CD4-positive, alpha-beta T cell (primary cell): ENCODE measurements at regions of chr20 and their contacts with region 1.

Region 1: DNA sequence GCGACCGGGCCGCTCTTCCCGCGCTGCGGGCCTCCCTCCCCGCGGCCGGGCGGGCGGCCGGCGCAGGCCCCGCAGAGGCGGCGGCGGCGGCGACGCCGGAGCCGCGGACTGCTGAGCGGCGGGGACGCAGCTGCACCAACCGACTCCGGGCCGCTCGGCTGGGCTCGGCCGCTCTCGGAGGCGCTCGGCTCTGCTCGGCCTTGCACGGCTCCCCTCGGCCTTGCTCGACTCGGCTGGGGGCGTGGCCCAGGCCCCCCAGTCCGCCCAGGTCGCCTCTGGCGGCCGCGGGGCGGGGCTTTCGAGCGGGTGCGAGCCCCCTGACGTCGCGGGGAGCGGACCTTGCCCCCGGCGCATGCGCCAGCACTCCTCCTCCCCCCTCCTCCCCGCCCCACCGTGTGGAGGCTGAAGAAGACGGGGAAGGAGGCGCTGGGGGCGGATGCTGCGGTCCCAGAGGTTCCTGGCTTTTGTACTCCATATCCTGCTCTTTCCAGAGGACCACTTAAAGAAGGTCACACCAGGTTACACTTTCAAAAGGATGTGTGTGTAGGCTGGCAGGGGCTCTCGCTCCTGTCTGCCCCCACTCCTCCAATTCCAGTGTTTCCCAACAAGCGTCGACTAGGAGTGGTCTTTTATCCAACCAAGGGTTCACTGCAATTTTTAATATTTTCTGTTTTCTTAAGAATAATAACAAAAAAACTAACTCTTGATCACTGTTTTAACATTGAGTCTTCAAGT is at the start of gene ZHX3:
- DNase-seq: peak; percentile 84 to 98 (median 96)
- ATAC-seq: peak; percentile 93
- H3K4me3 ChIP-seq: peak within 1 kb of the TSS; percentile 77
- H3K4me3 Mint-ChIP-seq: peak within 1 kb of the TSS; percentile 90
- H3K27ac ChIP-seq: peak within 1 kb of the TSS; percentile 38 to 57
- H3K27ac Mint-ChIP-seq: peak within 1 kb of the TSS; percentile 75
- H3K4me1 ChIP-seq: peaks cover 13% of the 10 kb centered on the region
- H3K4me1 Mint-ChIP-seq: peaks cover 38% of the 10 kb centered on the region
- H3K27me3 ChIP-seq: no peaks in the 10 kb centered on the region
- H3K27me3 Mint-ChIP-seq: no peaks in the 10 kb centered on the region
- CTCF ChIP-seq: no peak
- total RNA-seq, gene ZHX3: 6.6 to 7.6 TPM

Region 2: DNA sequence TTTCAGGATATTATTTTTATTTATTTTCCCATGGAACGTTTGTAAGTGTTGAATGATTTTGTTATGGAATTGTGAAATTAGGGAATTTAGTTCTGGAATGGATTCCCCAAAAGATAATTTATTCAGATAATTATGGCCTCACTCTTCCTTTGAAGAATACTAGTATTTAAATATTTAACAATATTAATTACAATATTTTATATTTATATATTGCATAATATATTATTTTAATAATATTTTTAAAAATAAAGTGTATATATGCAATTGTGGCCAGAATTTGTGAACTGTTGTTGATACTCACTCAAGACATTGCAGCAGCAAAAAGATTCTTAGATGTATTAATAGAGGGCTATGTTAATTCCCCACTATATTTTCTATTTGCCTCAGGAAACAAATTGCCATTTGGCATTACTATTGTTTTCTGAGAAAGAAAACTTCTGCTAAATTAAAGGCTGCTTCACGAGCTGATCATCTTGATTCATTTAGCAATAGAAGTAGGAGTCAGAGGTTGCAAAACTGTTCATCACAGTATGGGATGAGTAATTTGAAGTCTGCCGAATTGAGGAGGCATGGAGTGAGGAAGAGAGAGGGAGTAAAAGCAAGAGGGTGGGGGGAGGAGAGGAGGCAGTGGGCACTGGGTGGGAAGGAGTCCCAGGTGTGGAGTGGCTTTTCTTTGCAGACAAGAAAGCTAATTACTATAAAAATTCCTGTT is 1626.4 kb before region 1 on chr20:
- CTCF ChIA-PET with region 1: no interaction called
- POLR2A ChIA-PET with region 1: no interaction called
- intact Hi-C with region 1: no loop called
- DNase-seq: no peak
- ATAC-seq: no peak
- H3K4me3 ChIP-seq: no peak overlapping the region
- H3K4me3 Mint-ChIP-seq: no peak overlapping the region
- H3K27ac ChIP-seq: no peak overlapping the region
- H3K27ac Mint-ChIP-seq: no peak overlapping the region
- H3K4me1 ChIP-seq: no peaks in the 10 kb centered on the region
- H3K4me1 Mint-ChIP-seq: no peaks in the 10 kb centered on the region
- H3K27me3 ChIP-seq: no peaks in the 10 kb centered on the region
- H3K27me3 Mint-ChIP-seq: no peaks in the 10 kb centered on the region
- CTCF ChIP-seq: no peak

Region 3: GRCh38 chr20:40668449-40669228 is 649.1 kb before region 1 on chr20:
- CTCF ChIA-PET with region 1: no interaction called
- POLR2A ChIA-PET with region 1: no interaction called
- intact Hi-C with region 1: no loop called
- DNase-seq: no peak
- ATAC-seq: no peak
- H3K4me3 ChIP-seq: no peak overlapping the region
- H3K4me3 Mint-ChIP-seq: no peak overlapping the region
- H3K27ac ChIP-seq: no peak overlapping the region
- H3K27ac Mint-ChIP-seq: no peak overlapping the region
- H3K4me1 ChIP-seq: no peaks in the 10 kb centered on the region
- H3K4me1 Mint-ChIP-seq: no peaks in the 10 kb centered on the region
- H3K27me3 ChIP-seq: peaks cover 0 to 4% of the 10 kb centered on the region in 2 experiments
- H3K27me3 Mint-ChIP-seq: peaks cover 21% of the 10 kb centered on the region
- CTCF ChIP-seq: no peak

Region 4: GRCh38 chr20:41028348-41029148 is 289.2 kb before region 1 on chr20 and contains the start of gene TOP1:
- CTCF ChIA-PET with region 1: no interaction called
- POLR2A ChIA-PET with region 1: no interaction called
- intact Hi-C with region 1: loop called in 1 of 2 experiments (anchors 2 kb)
- DNase-seq: peak; percentile 99 to 100 (median 100)
- ATAC-seq: peak; percentile 97
- H3K4me3 ChIP-seq: peak within 1 kb of the TSS; percentile 83
- H3K4me3 Mint-ChIP-seq: peak within 1 kb of the TSS; percentile 98
- H3K27ac ChIP-seq: peak within 1 kb of the TSS; percentile 86 to 93
- H3K27ac Mint-ChIP-seq: peak within 1 kb of the TSS; percentile 98
- H3K4me1 ChIP-seq: peaks cover 36% of the 10 kb centered on the region
- H3K4me1 Mint-ChIP-seq: peaks cover 53% of the 10 kb centered on the region
- H3K27me3 ChIP-seq: no peaks in the 10 kb centered on the region
- H3K27me3 Mint-ChIP-seq: no peaks in the 10 kb centered on the region
- CTCF ChIP-seq: no peak
- total RNA-seq, gene TOP1: 37.6 to 41.7 TPM

Region 5: GRCh38 chr20:41161886-41162285 is 155.8 kb before region 1 on chr20:
- CTCF ChIA-PET with region 1: no interaction called
- POLR2A ChIA-PET with region 1: interaction called, 15 read pairs
- intact Hi-C with region 1: loop called in 1 of 2 experiments (anchors 5 kb)
- DNase-seq: peak in 3 of 14 experiments; percentile 42 to 61 (median 44)
- ATAC-seq: no peak
- H3K4me3 ChIP-seq: no peak overlapping the region
- H3K4me3 Mint-ChIP-seq: peak overlapping the region; percentile 70
- H3K27ac ChIP-seq: peak overlapping the region; percentile 78 to 85
- H3K27ac Mint-ChIP-seq: peak overlapping the region; percentile 96
- H3K4me1 ChIP-seq: peaks cover 89% of the 10 kb centered on the region
- H3K4me1 Mint-ChIP-seq: peaks cover 77% of the 10 kb centered on the region
- H3K27me3 ChIP-seq: no peaks in the 10 kb centered on the region
- H3K27me3 Mint-ChIP-seq: no peaks in the 10 kb centered on the region
- CTCF ChIP-seq: no peak

Region 6: DNA sequence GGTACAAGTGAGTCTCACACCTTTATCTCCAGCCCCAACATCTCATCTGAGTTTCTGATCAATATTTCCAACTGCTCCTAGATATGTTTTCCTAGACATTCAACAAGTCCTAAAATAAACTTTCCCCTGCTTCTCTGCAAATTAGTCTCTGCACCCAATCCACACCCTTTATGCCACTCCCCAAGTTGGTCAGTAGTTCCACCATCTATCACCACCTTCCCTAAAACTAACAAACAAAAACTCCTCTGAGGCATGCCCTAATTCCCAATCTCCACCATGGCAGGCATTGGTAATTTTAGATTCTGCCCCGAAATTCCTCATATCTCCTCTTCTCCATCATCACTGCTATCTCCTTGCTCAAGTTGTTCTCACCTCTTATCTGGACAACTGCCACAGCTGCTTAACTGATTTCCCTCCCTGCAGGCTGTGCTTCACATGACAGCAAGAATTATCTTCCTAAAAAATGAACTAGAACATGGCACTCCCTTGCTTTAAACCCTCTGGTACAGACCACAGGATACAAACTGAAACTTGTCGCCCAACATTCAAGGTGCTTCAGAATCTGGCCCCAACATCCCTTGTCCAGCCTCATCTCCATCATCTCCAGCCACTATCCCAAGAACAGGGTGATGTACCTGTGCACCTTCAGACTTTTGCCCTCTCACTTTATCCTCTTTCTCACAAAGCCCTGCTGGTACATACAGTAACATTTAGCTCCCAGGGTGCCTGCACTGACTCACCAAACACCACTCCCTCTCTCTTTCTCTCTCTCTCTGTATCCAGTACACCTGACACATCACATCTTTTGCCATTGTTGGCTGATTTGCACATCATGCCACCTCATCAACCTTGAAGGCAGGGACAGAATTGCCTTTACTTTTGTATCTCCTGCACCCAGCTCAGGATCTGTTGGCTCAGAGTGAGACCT is 55.6 kb before region 1 on chr20:
- CTCF ChIA-PET with region 1: no interaction called
- POLR2A ChIA-PET with region 1: no interaction called
- intact Hi-C with region 1: no loop called
- DNase-seq: no peak
- ATAC-seq: no peak
- H3K4me3 ChIP-seq: no peak overlapping the region
- H3K4me3 Mint-ChIP-seq: no peak overlapping the region
- H3K27ac ChIP-seq: no peak overlapping the region
- H3K27ac Mint-ChIP-seq: no peak overlapping the region
- H3K4me1 ChIP-seq: no peaks in the 10 kb centered on the region
- H3K4me1 Mint-ChIP-seq: no peaks in the 10 kb centered on the region
- H3K27me3 ChIP-seq: no peaks in the 10 kb centered on the region
- H3K27me3 Mint-ChIP-seq: no peaks in the 10 kb centered on the region
- CTCF ChIP-seq: no peak

Region 7: DNA sequence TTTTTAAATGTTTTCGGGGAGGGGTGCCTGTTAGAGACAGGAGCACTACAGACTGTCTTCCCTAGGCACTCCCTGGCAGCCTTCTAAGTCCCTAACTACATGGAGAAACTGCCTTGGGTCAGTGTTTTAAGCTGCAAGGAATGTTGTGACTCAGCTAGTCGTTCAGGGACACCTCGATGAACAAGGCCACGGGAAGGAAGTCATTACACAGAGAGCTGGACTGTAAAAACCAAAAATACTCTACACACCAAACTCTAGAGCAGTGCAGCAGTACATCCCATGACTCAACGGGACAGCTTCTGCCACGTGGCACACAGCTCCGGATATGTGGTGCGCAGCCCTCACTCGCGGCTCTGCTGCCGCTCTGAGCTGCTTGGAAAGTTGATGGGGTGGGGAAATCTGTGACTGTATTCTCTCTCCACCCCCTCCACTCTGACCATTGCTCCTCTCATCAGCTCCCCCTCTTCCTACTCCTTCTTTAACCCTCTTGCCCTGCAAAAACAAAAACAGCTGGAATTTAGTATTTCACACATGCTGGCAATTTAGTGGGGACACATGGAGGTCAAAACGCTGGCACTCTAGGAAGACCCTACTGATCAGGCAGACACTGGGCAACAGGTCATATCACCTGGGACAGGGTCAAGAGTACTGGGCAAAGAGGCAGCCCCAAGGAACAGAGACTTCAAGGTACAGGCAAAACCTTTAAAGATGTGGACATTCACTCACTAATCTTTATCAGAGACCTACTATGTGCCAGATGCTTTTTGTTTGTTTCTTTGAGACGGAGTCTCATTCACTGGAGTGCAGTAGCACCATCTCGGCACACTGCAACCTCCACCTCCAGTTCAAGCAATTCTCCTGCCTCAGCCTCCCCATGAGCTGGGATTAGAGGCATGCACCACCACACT is 12.0 kb after region 1 on chr20:
- CTCF ChIA-PET with region 1: interaction called, 3 read pairs
- POLR2A ChIA-PET with region 1: interaction called, 12 read pairs
- intact Hi-C with region 1: no loop called
- DNase-seq: peak; percentile 15 to 74 (median 49)
- ATAC-seq: peak; percentile 100
- H3K4me3 ChIP-seq: no peak overlapping the region
- H3K4me3 Mint-ChIP-seq: no peak overlapping the region
- H3K27ac ChIP-seq: no peak overlapping the region
- H3K27ac Mint-ChIP-seq: no peak overlapping the region
- H3K4me1 ChIP-seq: peaks cover 12% of the 10 kb centered on the region
- H3K4me1 Mint-ChIP-seq: peaks cover 11% of the 10 kb centered on the region
- H3K27me3 ChIP-seq: no peaks in the 10 kb centered on the region
- H3K27me3 Mint-ChIP-seq: no peaks in the 10 kb centered on the region
- CTCF ChIP-seq: no peak

Region 8: GRCh38 chr20:41617931-41618806 is 300.5 kb after region 1 on chr20 and contains the start of gene CHD6:
- CTCF ChIA-PET with region 1: no interaction called
- POLR2A ChIA-PET with region 1: no interaction called
- intact Hi-C with region 1: loop called in 1 of 2 experiments (anchors 5 kb)
- DNase-seq: peak; percentile 98 to 100 (median 99)
- ATAC-seq: peak; percentile 96
- H3K4me3 ChIP-seq: peak within 1 kb of the TSS; percentile 75
- H3K4me3 Mint-ChIP-seq: peak within 1 kb of the TSS; percentile 99
- H3K27ac ChIP-seq: peak within 1 kb of the TSS; percentile 10 to 53
- H3K27ac Mint-ChIP-seq: peak within 1 kb of the TSS; percentile 93
- H3K4me1 ChIP-seq: peaks cover 19% of the 10 kb centered on the region
- H3K4me1 Mint-ChIP-seq: peaks cover 55% of the 10 kb centered on the region
- H3K27me3 ChIP-seq: no peaks in the 10 kb centered on the region
- H3K27me3 Mint-ChIP-seq: no peaks in the 10 kb centered on the region
- CTCF ChIP-seq: no peak
- total RNA-seq, gene CHD6: 114 to 126 TPM

Region 9: GRCh38 chr20:41811456-41811855 is 493.8 kb after region 1 on chr20:
- CTCF ChIA-PET with region 1: no interaction called
- POLR2A ChIA-PET with region 1: no interaction called
- intact Hi-C with region 1: no loop called
- DNase-seq: no peak
- ATAC-seq: no peak
- H3K4me3 ChIP-seq: no peak overlapping the region
- H3K4me3 Mint-ChIP-seq: no peak overlapping the region
- H3K27ac ChIP-seq: no peak overlapping the region
- H3K27ac Mint-ChIP-seq: no peak overlapping the region
- H3K4me1 ChIP-seq: no peaks in the 10 kb centered on the region
- H3K4me1 Mint-ChIP-seq: no peaks in the 10 kb centered on the region
- H3K27me3 ChIP-seq: no peaks in the 10 kb centered on the region
- H3K27me3 Mint-ChIP-seq: peaks cover 4% of the 10 kb centered on the region
- CTCF ChIP-seq: no peak